T-cell (primary cell): ENCODE measurements at regions of chr3 and their contacts with region 1.

Region 1: DNA sequence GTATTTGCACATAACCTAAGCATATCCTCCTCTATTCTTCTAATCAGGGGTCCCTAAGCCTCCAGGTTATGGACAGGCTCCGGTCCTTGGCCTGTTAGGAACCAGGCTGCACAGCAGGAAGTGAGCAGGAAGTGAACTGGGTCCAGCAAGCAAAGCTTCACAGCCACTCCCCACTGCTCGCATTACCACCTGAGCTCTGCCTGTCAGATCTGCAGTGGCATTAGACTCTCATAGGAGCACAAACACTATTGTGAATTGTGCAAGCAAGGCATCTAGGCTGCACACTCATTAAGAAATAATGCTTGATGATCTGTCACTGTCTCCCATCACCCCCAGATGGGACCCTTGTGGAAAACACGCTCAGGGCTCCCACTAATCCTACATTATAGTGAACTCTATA is 9.8 kb downstream of the MSL2 start:
- DNase-seq: peak in 11 of 35 experiments; percentile 5 to 42 (median 17)
- ATAC-seq: peak; percentile 47 to 81 (median 74)
- H3K4me3 ChIP-seq: no peak overlapping the region
- H3K4me3 Mint-ChIP-seq: peak overlapping the region; percentile 61 to 88 (median 67)
- H3K27ac ChIP-seq: no peak overlapping the region
- H3K27ac Mint-ChIP-seq: peak overlapping the region; percentile 72 to 80
- H3K4me1 ChIP-seq: peaks cover 32 to 71% of the 10 kb centered on the region in 2 experiments
- H3K4me1 Mint-ChIP-seq: peaks cover 93 to 96% (median 94%) of the 10 kb centered on the region in 3 donors
- H3K27me3 ChIP-seq: no peaks in the 10 kb centered on the region
- H3K27me3 Mint-ChIP-seq: no peaks in the 10 kb centered on the region

Region 2: DNA sequence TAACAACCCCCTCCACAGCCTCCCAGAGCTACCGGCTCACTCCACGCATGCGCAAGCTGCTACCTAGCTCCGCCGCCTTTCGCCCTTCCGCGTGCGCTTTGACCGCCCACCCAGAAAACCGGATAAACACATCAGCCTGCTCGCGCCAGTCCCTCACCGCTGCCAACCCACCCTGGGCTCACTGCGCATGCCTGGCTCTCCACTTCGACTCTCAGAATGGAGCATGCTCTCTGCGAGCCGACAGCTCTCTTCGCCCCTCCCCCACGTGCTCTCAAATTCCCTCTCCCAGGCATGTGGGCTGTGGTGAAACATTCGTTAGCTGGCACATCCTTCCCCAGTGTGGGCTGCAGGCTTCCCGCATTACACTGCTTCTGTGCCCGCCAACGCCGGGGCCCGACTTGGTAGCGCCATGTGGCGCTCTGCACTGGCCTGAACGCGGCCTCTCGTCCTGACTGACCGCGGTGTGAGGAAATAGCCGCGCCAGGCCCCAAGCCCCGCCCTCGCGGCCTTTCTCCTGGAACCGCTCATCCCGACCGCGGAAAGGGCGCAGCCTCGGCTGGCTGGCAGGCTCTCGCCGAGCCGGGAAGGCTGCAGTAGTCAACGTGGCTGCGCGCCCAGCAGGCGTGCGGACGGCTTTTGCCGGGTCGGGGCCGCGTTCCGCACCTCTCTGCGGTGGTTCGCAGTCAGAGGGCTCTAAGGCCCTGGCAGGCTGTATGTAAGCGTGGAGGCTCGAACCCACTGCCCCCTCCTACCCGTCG is 10.2 kb after region 1 on chr3:
- CTCF ChIA-PET with region 1: interaction called in 1 of 2 experiments, 6 read pairs
- POLR2A ChIA-PET with region 1: interaction called, 6 to 13 read pairs
- DNase-seq: peak; percentile 89 to 99 (median 96)
- ATAC-seq: peak; percentile 68 to 72 (median 71)
- H3K4me3 ChIP-seq: peak overlapping the region; percentile 75 to 94
- H3K4me3 Mint-ChIP-seq: peak overlapping the region; percentile 88 to 99 (median 94)
- H3K27ac ChIP-seq: peak overlapping the region; percentile 96
- H3K27ac Mint-ChIP-seq: peak overlapping the region; percentile 98 to 100
- H3K4me1 ChIP-seq: peaks cover 13 to 24% of the 10 kb centered on the region in 2 experiments
- H3K4me1 Mint-ChIP-seq: peaks cover 32 to 52% (median 33%) of the 10 kb centered on the region in 3 donors
- H3K27me3 ChIP-seq: peaks cover 0 to 4% of the 10 kb centered on the region in 2 experiments
- H3K27me3 Mint-ChIP-seq: no peaks in the 10 kb centered on the region

Region 3: DNA sequence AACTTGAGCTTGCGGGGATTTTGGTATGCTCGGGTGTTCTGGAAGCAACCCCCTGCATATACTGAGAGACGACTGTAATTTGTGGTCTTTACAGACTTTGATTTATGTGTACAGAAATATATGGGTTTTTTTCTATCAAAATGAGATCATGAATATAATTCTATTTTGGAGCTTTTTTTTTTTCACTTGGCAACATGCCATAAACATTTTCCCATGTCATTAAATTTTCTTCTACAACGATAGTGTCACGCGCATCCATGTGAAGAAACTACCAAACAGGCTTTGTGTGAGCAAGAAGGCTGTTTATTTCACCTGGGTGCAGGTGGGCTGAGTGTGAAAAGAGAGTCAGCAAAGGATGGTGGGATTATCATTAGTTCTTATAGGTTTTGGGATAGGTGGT is 30.9 kb after region 1 on chr3:
- CTCF ChIA-PET with region 1: no interaction called
- POLR2A ChIA-PET with region 1: no interaction called
- DNase-seq: no peak
- ATAC-seq: no peak
- H3K4me3 ChIP-seq: no peak overlapping the region
- H3K4me3 Mint-ChIP-seq: no peak overlapping the region
- H3K27ac ChIP-seq: no peak overlapping the region
- H3K27ac Mint-ChIP-seq: no peak overlapping the region
- H3K4me1 ChIP-seq: no peaks in the 10 kb centered on the region
- H3K4me1 Mint-ChIP-seq: no peaks in the 10 kb centered on the region
- H3K27me3 ChIP-seq: peaks cover 0 to 9% of the 10 kb centered on the region in 2 experiments
- H3K27me3 Mint-ChIP-seq: peaks cover 0 to 4% of the 10 kb centered on the region in 2 donors

Region 4: DNA sequence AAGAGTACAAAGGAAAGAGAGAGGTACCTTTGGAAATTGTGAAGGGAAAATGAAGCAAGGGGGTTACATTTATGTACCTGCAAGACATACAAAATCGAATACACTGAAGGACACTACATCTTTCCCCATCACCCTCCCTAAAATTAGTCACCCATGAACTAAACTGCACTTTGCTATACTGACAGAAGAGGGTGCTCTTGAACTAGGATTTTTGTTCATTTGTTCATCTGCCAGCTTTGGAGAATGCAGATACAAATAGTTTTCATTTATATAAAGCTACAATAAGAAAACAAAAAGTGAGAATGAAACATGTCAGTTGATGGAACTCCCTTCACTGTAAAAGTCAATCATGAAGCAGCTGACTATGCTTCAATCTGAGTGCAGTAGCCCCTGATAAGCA is 119.5 kb after region 1 on chr3:
- CTCF ChIA-PET with region 1: no interaction called
- POLR2A ChIA-PET with region 1: interaction called in 1 of 2 experiments, 10 read pairs
- DNase-seq: no peak
- ATAC-seq: no peak
- H3K4me3 ChIP-seq: no peak overlapping the region
- H3K4me3 Mint-ChIP-seq: no peak overlapping the region
- H3K27ac ChIP-seq: no peak overlapping the region
- H3K27ac Mint-ChIP-seq: no peak overlapping the region
- H3K4me1 ChIP-seq: no peaks in the 10 kb centered on the region
- H3K4me1 Mint-ChIP-seq: no peaks in the 10 kb centered on the region
- H3K27me3 ChIP-seq: no peaks in the 10 kb centered on the region
- H3K27me3 Mint-ChIP-seq: no peaks in the 10 kb centered on the region

Region 5: DNA sequence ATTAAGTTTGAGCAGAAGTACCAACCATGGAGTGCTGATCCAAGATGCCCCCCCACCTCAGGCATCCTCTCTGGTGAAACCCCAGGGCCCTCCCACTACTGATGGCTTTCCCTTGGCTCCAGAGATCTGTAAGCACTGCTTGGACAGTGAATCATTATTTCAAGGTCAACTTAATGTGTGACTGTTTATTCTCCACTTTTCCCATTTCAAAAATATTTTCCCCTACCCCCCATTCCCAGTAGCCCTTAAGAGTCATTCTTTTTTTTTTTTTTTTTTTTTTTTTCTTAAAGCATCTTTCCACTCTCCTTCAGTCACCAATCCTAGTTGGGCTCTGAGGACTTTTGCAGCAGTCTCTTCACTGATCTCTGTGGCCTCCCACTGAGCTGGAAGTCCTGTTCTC is 146.4 kb after region 1 on chr3:
- CTCF ChIA-PET with region 1: no interaction called
- POLR2A ChIA-PET with region 1: no interaction called
- DNase-seq: no peak
- ATAC-seq: no peak
- H3K4me3 ChIP-seq: no peak overlapping the region
- H3K4me3 Mint-ChIP-seq: no peak overlapping the region
- H3K27ac ChIP-seq: no peak overlapping the region
- H3K27ac Mint-ChIP-seq: no peak overlapping the region
- H3K4me1 ChIP-seq: no peaks in the 10 kb centered on the region
- H3K4me1 Mint-ChIP-seq: peaks cover 0 to 3% (median 0%) of the 10 kb centered on the region in 3 donors
- H3K27me3 ChIP-seq: no peaks in the 10 kb centered on the region
- H3K27me3 Mint-ChIP-seq: no peaks in the 10 kb centered on the region